IMR-90 (cell line): ENCODE measurements at regions of chr19 and their contacts with region 1.

Region 1: GRCh38 chr19:41373993-41374392 is 2.3 kb upstream of the TMEM91 start:
- DNase-seq: peak; percentile 92
- ATAC-seq: peak; percentile 70
- H3K4me3 ChIP-seq: no peak overlapping the region
- H3K27ac ChIP-seq: no peak overlapping the region
- H3K4me1 ChIP-seq: peaks cover 7% of the 10 kb centered on the region; the same call in 1 of the 2 replicates
- H3K27me3 ChIP-seq: no peaks in the 10 kb centered on the region
- CTCF ChIP-seq: no peak
- POLR2A ChIP-seq: no peak
- RAD21 ChIP-seq: no peak

Region 2: GRCh38 chr19:41175801-41176777 is 197.9 kb before region 1 on chr19:
- CTCF ChIA-PET with region 1: no interaction called
- POLR2A ChIA-PET with region 1: no interaction called
- dilution Hi-C with region 1: no loop called
- in situ Hi-C with region 1: no loop called
- intact Hi-C with region 1: no loop called
- DNase-seq: peak; percentile 76
- ATAC-seq: peak; percentile 99
- H3K4me3 ChIP-seq: no peak overlapping the region
- H3K27ac ChIP-seq: peak overlapping the region; percentile 67
- H3K4me1 ChIP-seq: peaks cover 8% of the 10 kb centered on the region
- H3K27me3 ChIP-seq: no peaks in the 10 kb centered on the region
- CTCF ChIP-seq: no peak
- POLR2A ChIP-seq: no peak
- RAD21 ChIP-seq: no peak

Region 3: GRCh38 chr19:41397086-41398049 is 23.4 kb after region 1 on chr19 and contains the starts of genes BCKDHA and EXOSC5:
- CTCF ChIA-PET with region 1: no interaction called
- POLR2A ChIA-PET with region 1: no interaction called
- dilution Hi-C with region 1: no loop called
- in situ Hi-C with region 1: no loop called
- intact Hi-C with region 1: loop called (anchors 1 kb)
- DNase-seq: peak; percentile 100
- ATAC-seq: peak; percentile 99
- H3K4me3 ChIP-seq: peak within 1 kb of the TSS; percentile 79
- H3K27ac ChIP-seq: peak within 1 kb of the TSS; percentile 70
- H3K4me1 ChIP-seq: peaks cover 4% of the 10 kb centered on the region; the same call in 1 of the 2 replicates
- H3K27me3 ChIP-seq: no peaks in the 10 kb centered on the region
- CTCF ChIP-seq: no peak
- POLR2A ChIP-seq: 0 out of 2 replicates have a peak, but pooled peaks have one; percentile 43
- RAD21 ChIP-seq: 0 out of 2 replicates have a peak, but pooled peaks have one; percentile 5
- total RNA-seq, gene BCKDHA: 6.4 and 7.7 TPM in 2 replicates
- total RNA-seq, gene EXOSC5: 11.4 and 19.0 TPM in 2 replicates

Region 4: GRCh38 chr19:41499899-41500298 is 125.9 kb after region 1 on chr19:
- CTCF ChIA-PET with region 1: no interaction called
- POLR2A ChIA-PET with region 1: no interaction called
- dilution Hi-C with region 1: no loop called
- in situ Hi-C with region 1: no loop called
- intact Hi-C with region 1: no loop called
- DNase-seq: no peak
- ATAC-seq: no peak
- H3K4me3 ChIP-seq: no peak overlapping the region
- H3K27ac ChIP-seq: no peak overlapping the region
- H3K4me1 ChIP-seq: no peaks in the 10 kb centered on the region
- H3K27me3 ChIP-seq: no peaks in the 10 kb centered on the region
- CTCF ChIP-seq: no peak
- POLR2A ChIP-seq: no peak
- RAD21 ChIP-seq: no peak

Region 5: GRCh38 chr19:41554907-41555306 is 180.9 kb after region 1 on chr19:
- CTCF ChIA-PET with region 1: no interaction called
- POLR2A ChIA-PET with region 1: no interaction called
- dilution Hi-C with region 1: no loop called
- in situ Hi-C with region 1: no loop called
- intact Hi-C with region 1: no loop called
- DNase-seq: no peak
- ATAC-seq: no peak
- H3K4me3 ChIP-seq: no peak overlapping the region
- H3K27ac ChIP-seq: no peak overlapping the region
- H3K4me1 ChIP-seq: no peaks in the 10 kb centered on the region
- H3K27me3 ChIP-seq: peaks cover 12% of the 10 kb centered on the region
- CTCF ChIP-seq: no peak
- POLR2A ChIP-seq: no peak
- RAD21 ChIP-seq: no peak

Region 6: DNA sequence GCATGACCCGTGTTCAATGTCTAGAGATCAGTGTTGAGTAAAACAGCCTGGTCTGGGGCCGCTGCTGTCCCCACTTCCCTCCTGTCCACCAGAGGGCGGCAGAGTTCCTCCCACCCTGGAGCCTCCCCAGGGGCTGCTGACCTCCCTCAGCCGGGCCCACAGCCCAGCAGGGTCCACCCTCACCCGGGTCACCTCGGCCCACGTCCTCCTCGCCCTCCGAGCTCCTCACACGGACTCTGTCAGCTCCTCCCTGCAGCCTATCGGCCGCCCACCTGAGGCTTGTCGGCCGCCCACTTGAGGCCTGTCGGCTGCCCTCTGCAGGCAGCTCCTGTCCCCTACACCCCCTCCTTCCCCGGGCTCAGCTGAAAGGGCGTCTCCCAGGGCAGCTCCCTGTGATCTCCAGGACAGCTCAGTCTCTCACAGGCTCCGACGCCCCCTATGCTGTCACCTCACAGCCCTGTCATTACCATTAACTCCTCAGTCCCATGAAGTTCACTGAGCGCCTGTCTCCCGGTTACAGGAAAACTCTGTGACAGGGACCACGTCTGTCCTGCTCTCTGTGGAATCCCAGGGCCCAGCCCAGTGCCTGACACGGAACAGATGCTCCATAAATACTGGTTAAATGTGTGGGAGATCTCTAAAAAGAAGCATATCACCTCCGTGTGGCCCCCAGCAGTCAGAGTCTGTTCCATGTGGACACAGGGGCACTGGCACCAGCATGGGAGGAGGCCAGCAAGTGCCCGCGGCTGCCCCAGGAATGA is 332.9 kb after region 1 on chr19:
- CTCF ChIA-PET with region 1: no interaction called
- POLR2A ChIA-PET with region 1: no interaction called
- dilution Hi-C with region 1: no loop called
- in situ Hi-C with region 1: no loop called
- intact Hi-C with region 1: no loop called
- DNase-seq: no peak
- ATAC-seq: peak; percentile 64; the same call in 1 of the 2 replicates
- H3K4me3 ChIP-seq: no peak overlapping the region
- H3K27ac ChIP-seq: no peak overlapping the region
- H3K4me1 ChIP-seq: no peaks in the 10 kb centered on the region
- H3K27me3 ChIP-seq: no peaks in the 10 kb centered on the region; the same call in 1 of the 2 replicates
- CTCF ChIP-seq: no peak; the same call in 1 of the 2 replicates
- POLR2A ChIP-seq: no peak
- RAD21 ChIP-seq: no peak